Breast epithelium (tissue), 4 donors: ENCODE measurements at regions of chr1 and their contacts with region 1.

Region 1: DNA sequence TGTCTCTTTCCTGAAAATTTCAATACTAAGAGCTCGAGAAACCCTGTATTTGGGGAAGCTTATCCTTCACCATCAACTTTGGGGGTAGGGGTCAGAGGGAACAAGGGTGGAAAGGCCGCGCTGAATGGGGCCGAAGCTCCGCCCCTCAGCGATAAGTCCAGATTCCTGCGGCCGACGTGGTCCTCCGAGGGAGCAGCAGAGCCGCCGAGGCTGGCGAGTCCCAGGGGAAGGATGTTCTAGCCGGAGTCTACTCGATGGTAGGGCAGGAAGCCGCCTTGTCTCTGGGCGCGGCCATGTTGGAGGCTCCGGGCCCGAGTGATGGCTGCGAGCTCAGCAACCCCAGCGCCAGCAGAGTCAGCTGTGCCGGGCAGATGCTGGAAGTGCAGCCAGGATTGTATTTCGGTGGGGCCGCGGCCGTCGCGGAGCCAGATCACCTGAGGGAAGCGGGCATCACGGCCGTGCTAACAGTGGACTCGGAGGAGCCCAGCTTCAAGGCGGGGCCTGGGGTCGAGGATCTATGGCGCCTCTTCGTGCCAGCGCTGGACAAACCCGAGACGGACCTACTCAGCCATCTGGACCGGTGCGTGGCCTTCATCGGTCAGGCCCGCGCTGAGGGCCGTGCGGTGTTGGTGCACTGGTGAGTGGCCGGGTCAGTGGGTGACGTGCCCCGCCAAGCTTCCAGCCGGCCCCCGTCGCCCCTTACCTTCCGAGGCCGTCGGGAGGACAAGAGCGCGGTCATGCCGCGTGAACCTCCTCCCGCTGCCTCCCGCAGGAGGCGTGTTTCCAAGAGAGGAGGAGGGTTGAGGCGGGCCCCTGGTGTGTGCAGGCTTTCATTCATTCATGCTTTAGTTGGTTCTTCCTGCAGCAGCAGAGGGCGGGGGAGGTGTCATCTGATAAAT is at the start of gene DUSP12:
- DNase-seq: peak; percentile 85 to 89
- H3K4me3 ChIP-seq: peak within 1 kb of the TSS; percentile 76 to 81 (median 78)
- H3K27ac ChIP-seq: peak within 1 kb of the TSS; percentile 67 to 85
- H3K4me1 ChIP-seq: peaks cover 0 to 3% of the 10 kb centered on the region in 2 donors
- H3K27me3 ChIP-seq: no peaks in the 10 kb centered on the region
- CTCF ChIP-seq: no peak
- POLR2A ChIP-seq: no peak
- total RNA-seq, gene DUSP12: 14.6 to 44.9 (median 36.1) TPM

Region 2: GRCh38 chr1:161486806-161487741 is 262.7 kb before region 1 on chr1:
- intact Hi-C with region 1: loop called (anchors 10 kb)
- DNase-seq: peak in 1 of 2 donors; percentile 45
- H3K4me3 ChIP-seq: peak overlapping the region in 2 of 3 donors; percentile 14 to 41
- H3K27ac ChIP-seq: no peak overlapping the region
- H3K4me1 ChIP-seq: no peaks in the 10 kb centered on the region
- H3K27me3 ChIP-seq: peaks cover 0 to 5% of the 10 kb centered on the region in 2 donors
- CTCF ChIP-seq: peak; percentile 62 to 82 (median 72)
- POLR2A ChIP-seq: no peak

Region 3: GRCh38 chr1:161511018-161511755 is 238.6 kb before region 1 on chr1:
- intact Hi-C with region 1: no loop called
- DNase-seq: no peak
- H3K4me3 ChIP-seq: no peak overlapping the region
- H3K27ac ChIP-seq: no peak overlapping the region
- H3K4me1 ChIP-seq: no peaks in the 10 kb centered on the region
- H3K27me3 ChIP-seq: no peaks in the 10 kb centered on the region
- CTCF ChIP-seq: no peak
- POLR2A ChIP-seq: no peak

Region 4: GRCh38 chr1:161781995-161782394 is 32.2 kb after region 1 on chr1:
- intact Hi-C with region 1: no loop called
- DNase-seq: no peak
- H3K4me3 ChIP-seq: no peak overlapping the region
- H3K27ac ChIP-seq: no peak overlapping the region
- H3K4me1 ChIP-seq: no peaks in the 10 kb centered on the region
- H3K27me3 ChIP-seq: no peaks in the 10 kb centered on the region
- CTCF ChIP-seq: no peak
- POLR2A ChIP-seq: no peak